ENCODE measurements at regions of chr19 and their contacts with region 1.

Region 1: DNA sequence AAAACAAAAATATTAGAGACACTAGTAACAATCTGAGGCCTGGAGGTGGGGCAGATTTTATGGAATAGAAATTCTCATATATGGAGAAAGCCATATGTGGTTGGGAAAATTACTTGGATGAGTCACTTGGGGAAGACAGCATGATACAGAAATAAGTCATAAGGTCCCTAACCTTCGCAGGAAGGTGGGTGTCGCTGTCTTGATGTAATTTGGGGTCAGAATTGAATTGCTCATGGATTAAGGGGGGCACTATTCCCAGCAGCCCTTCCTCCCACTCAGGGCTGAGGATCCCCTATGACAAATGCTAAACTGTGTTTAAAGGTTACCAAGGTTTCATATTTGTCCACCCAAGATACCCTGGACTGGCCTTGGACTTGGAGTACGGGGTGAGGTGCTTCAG is 5.0 kb downstream of the RDH8 start:
- DNase-seq: no peak
- ATAC-seq: no peak
- H3K4me3 ChIP-seq: no peak overlapping the region
- H3K27ac ChIP-seq: no peak overlapping the region
- H3K4me1 ChIP-seq: no peaks in the 10 kb centered on the region
- H3K27me3 ChIP-seq: peaks cover 0 to 29% (median 11%) of the 10 kb centered on the region in 7 donors
- CTCF ChIP-seq: no peak

Region 2: DNA sequence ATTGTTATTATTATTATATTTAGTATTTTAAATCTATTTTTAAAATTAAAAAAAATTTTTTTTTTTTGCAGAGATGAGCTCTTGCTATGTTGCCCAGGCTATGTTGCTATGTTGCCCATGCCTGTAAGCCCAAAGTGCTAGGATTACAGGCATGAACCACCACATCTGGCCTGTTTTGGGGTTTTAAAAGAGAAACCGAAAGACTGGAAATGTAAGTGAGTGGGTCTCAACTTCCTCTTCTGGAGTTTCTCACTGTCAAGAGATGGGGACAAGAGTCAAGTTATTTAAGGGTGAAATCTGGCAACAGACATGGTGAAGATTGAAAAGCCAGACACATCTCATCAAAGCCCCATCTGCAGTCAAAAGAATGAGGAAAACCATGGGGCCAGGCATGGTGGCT is 887.3 kb before region 1 on chr19:
- intact Hi-C with region 1: loop called in 1 of 10 experiments (anchors 5 kb)
- DNase-seq: no peak
- ATAC-seq: no peak
- H3K4me3 ChIP-seq: no peak overlapping the region
- H3K27ac ChIP-seq: no peak overlapping the region
- H3K4me1 ChIP-seq: no peaks in the 10 kb centered on the region
- H3K27me3 ChIP-seq: peaks cover 0 to 54% (median 19%) of the 10 kb centered on the region in 7 donors
- CTCF ChIP-seq: no peak

Region 3: GRCh38 chr19:9986787-9987281 is 31.4 kb before region 1 on chr19:
- intact Hi-C with region 1: no loop called
- DNase-seq: peak; percentile 36 to 54
- ATAC-seq: peak; percentile 74 to 90 (median 83)
- H3K4me3 ChIP-seq: no peak overlapping the region
- H3K27ac ChIP-seq: peak overlapping the region in 7 of 10 donors; percentile 34 to 78 (median 66)
- H3K4me1 ChIP-seq: peaks cover 0 to 22% (median 12%) of the 10 kb centered on the region in 9 donors
- H3K27me3 ChIP-seq: peaks cover 0 to 16% (median 6%) of the 10 kb centered on the region in 7 donors
- CTCF ChIP-seq: no peak

Region 4: GRCh38 chr19:10158485-10158884 is 140.2 kb after region 1 on chr19:
- intact Hi-C with region 1: no loop called
- DNase-seq: no peak
- ATAC-seq: peak in 2 of 8 donors; percentile 25 to 37
- H3K4me3 ChIP-seq: no peak overlapping the region
- H3K27ac ChIP-seq: no peak overlapping the region
- H3K4me1 ChIP-seq: no peaks in the 10 kb centered on the region
- H3K27me3 ChIP-seq: no peaks in the 10 kb centered on the region
- CTCF ChIP-seq: no peak